ENCODE measurements at regions of chr19 and their contacts with region 1.

Region 1: GRCh38 chr19:32041681-32042292 is 303.6 kb upstream of the ZNF507 start:
- DNase-seq: peak; percentile 31
- ATAC-seq: peak; percentile 57; the same call in 1 of the 2 replicates
- H3K4me3 ChIP-seq: peak overlapping the region; percentile 12; the same call in 1 of the 2 replicates
- H3K27ac ChIP-seq: no peak overlapping the region
- H3K4me1 ChIP-seq: no peaks in the 10 kb centered on the region
- H3K27me3 ChIP-seq: no peaks in the 10 kb centered on the region; the same call in none of the 2 replicates
- CTCF ChIP-seq: peak; percentile 76
- POLR2A ChIP-seq: no peak
- RAD21 ChIP-seq: peak; percentile 67

Region 2: DNA sequence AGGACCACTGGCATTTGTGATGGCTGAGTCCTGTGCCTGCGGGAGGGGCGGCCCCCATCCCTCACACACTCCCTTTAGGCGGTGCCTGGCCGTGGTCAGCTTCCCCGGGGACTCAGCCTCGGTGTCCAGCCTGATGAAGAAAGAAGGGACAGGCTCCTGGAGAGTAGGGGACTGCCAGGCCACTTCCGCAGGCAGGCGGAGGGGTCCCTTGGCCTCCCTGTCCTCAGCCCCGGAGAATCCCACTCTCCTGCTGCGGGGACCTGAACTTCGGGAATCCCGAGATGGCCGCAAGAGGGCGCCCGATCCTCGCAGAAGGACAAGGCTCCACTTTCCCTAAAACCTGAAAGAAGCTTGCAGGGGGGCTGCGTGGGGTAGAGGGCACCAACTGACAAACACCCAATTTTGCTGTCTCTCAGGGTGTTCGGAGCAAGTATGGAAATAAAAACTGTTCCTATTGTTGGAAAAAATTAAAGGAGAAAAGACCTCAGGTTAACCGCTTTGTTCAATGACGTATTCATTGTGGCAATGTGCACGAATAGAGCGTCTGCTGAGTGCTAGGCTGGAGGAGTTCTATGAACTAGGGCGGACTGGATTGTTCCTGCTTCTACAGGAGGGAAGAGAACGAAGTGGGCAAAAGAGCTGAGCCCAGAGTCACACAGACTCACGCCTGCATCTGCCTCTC is 1372.3 kb before region 1 on chr19:
- CTCF ChIA-PET with region 1: no interaction called
- POLR2A ChIA-PET with region 1: no interaction called
- dilution Hi-C with region 1: no loop called
- in situ Hi-C with region 1: no loop called
- intact Hi-C with region 1: loop called (anchors 5 kb)
- DNase-seq: peak; percentile 12
- ATAC-seq: peak; percentile 72
- H3K4me3 ChIP-seq: no peak overlapping the region
- H3K27ac ChIP-seq: no peak overlapping the region
- H3K4me1 ChIP-seq: no peaks in the 10 kb centered on the region
- H3K27me3 ChIP-seq: no peaks in the 10 kb centered on the region; the same call in 1 of the 2 replicates
- CTCF ChIP-seq: peak; percentile 64
- POLR2A ChIP-seq: no peak
- RAD21 ChIP-seq: peak; percentile 57

Region 3: DNA sequence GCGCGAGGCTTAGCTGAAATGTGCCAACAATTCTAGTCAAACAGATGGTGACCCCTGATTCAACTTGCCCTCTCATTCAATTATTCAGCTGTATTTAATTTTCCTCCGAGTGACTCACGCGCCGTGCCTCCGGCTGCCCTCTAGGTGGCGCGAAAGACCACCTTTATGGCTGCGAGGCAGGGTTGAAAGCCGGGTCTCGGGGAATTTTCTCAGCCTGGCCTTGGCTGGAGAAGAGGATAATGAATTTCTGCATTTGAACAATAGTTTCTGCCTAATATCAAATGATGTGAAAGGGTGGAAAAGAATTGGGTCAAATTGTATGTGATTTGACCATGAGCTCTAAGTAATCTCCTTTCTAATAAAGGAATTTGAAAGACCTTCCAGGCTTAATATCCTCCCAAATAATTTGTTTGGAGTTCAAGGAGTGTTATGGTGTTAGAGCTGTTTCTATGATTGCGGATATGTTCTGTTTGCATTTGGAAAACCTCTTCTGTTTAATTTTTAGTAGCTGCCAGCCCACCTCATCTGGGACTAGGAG is 1358.7 kb before region 1 on chr19:
- CTCF ChIA-PET with region 1: no interaction called
- POLR2A ChIA-PET with region 1: no interaction called
- dilution Hi-C with region 1: no loop called
- in situ Hi-C with region 1: no loop called
- intact Hi-C with region 1: loop called (anchors 1 kb)
- DNase-seq: peak; percentile 82
- ATAC-seq: peak; percentile 97
- H3K4me3 ChIP-seq: no peak overlapping the region
- H3K27ac ChIP-seq: no peak overlapping the region
- H3K4me1 ChIP-seq: no peaks in the 10 kb centered on the region
- H3K27me3 ChIP-seq: peaks cover 11% of the 10 kb centered on the region
- CTCF ChIP-seq: peak; percentile 97
- POLR2A ChIP-seq: no peak; the same call in 1 of the 2 replicates
- RAD21 ChIP-seq: peak; percentile 90

Region 4: GRCh38 chr19:31110331-31110730 is 931.5 kb before region 1 on chr19:
- CTCF ChIA-PET with region 1: no interaction called
- POLR2A ChIA-PET with region 1: no interaction called
- dilution Hi-C with region 1: no loop called
- in situ Hi-C with region 1: no loop called
- intact Hi-C with region 1: loop called (anchors 5 kb)
- DNase-seq: peak; percentile 45
- ATAC-seq: peak; percentile 87
- H3K4me3 ChIP-seq: no peak overlapping the region
- H3K27ac ChIP-seq: no peak overlapping the region
- H3K4me1 ChIP-seq: 0 out of 2 replicates have a peak, but pooled peaks cover 2% of the 10 kb centered on the region
- H3K27me3 ChIP-seq: no peaks in the 10 kb centered on the region; the same call in 1 of the 2 replicates
- CTCF ChIP-seq: peak; percentile 59
- POLR2A ChIP-seq: no peak
- RAD21 ChIP-seq: peak; percentile 74

Measured in IMR-90 (cell line).